Posterior vena cava (tissue), 2 donors: ENCODE measurements at regions of chr4 and their contacts with region 1.

Region 1: DNA sequence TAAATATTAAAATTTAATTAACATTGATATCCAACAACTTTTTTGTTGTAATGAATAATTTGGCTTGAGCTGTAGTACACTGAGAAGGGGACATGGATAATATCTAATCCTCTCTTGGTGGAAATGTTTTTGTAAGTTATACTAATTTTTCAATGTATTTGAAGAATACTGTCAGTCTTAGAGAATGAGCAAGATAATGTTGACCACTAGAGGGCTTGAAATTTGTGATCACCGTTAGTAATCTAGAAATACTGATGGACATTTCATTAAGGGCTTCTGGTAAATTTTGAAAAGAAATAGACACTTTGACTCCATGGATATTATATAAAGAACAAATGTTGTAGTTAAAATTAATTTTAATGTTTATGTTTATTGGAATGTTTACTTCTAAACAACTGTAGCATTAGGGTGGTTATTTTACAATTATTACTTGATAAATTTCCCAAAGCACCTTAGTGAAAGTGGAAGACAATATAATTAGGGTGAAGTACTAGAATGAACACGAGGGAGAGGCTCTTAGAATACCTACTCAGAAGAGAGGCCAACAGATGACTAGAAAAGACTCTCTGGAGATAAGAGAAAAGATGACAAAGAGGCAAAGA is 20.0 kb upstream of the CAMK2D start:
- DNase-seq: no peak

Region 2: DNA sequence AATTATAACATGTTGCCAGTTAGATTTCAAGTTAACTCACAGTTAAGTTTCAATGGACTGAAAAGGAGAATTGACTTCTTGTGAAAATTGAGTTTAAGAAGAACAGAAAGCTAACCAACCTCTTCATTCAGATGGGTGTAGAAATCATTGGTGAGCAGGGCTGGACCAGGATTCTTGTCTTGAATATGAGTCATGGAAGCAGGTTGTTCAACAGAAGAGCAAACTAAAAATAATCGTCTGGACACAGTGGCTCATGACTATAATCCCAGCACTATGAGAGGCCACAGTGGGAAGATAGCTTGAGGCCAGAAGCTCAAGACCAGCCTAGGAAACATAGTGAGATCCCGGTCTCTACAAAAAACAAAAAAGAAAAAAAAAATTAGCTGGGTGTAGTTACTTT is 99.7 kb after region 1 on chr4:
- intact Hi-C with region 1: loop called in 1 of 2 experiments (anchors 10 kb)
- DNase-seq: no peak